Posterior vena cava (tissue), 2 donors: ENCODE measurements at regions of chr3 and their contacts with region 1.

Region 1: GRCh38 chr3:159765025-159765859 is 223.4 kb upstream of the IL12A start:
- DNase-seq: peak; percentile 96

Region 2: DNA sequence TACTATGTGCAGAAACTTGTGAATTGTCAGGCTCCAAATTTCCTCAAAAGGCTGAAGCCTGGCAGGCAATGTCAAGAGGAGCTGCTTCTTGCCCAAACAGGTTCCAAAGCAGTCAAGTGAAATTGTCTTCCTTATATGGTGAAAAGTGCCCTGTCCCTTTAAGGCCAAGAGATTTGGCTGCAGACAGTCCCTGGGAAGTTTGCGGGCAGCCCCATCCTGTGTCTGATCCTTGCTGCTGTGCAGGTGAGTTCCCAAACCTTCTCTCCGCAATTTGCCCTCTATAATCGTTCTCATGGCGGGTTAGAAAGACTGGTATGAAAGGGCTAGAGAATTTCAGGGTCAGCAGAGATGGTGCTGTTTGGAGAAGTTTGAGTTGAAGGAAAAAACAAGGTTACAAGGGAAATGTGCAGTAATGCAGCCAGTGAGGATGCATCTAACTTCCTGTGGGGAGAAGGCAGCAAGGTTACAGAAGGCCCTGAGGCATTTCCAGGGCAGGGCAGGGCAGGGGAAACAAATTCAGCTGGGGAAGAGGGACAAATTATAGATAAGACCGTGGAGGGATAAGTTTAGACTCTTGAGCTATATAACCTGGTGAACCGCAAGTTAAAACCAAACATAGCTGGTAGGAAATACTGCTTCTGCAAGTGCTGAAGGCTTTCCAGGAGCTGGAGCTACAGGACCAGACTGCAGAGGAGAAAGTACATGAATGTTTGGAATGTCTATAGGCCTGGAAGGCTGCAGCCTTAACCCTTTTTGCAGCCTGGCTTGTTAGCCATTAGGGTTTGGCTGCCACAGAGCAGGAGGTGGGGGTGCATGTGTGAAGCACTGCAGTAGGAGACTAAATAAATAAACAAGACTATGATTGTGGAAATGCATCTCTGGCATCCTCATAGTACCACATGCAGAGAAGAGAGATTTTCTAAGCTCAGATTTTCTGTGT is 32.8 kb before region 1 on chr3:
- intact Hi-C with region 1: no loop called
- DNase-seq: no peak

Region 3: DNA sequence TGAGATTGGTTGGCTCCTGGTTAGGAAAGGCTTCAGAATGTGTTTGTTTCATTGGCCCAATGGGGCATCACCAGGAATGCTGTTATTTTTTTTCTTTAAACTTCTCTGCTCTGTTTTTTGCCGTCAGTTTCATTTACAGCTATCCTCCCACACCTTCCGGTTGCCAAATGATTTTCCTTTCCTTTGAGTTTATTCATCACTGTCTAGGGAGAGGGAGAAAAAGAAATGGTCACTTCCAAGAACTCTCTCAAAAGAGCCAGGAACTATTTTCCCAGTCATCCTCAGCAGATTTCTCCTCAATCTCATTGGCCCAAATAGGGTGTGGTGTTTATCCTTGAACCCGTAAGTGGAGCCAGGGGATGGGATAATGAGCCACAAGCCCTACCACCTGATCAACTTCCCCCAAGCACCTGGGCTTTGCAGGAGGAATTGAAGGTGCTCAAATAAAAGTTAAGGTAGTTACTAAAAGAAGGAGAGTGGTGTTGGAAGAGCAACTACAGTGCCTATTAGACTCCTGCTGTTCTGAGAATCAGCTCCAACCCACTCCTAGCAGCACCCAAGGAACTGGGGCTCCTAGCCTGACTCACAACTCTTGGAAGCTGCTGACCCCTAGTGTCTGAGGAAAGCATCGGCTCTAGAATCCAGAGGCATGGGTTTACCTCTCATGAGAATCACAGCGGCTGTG is 39.6 kb after region 1 on chr3:
- intact Hi-C with region 1: loop called in 1 of 2 experiments (anchors 5 kb)
- DNase-seq: no peak

Region 4: GRCh38 chr3:159872374-159873109 is 107.3 kb after region 1 on chr3:
- intact Hi-C with region 1: loop called in 1 of 2 experiments (anchors 5 kb)
- DNase-seq: no peak

Region 5: DNA sequence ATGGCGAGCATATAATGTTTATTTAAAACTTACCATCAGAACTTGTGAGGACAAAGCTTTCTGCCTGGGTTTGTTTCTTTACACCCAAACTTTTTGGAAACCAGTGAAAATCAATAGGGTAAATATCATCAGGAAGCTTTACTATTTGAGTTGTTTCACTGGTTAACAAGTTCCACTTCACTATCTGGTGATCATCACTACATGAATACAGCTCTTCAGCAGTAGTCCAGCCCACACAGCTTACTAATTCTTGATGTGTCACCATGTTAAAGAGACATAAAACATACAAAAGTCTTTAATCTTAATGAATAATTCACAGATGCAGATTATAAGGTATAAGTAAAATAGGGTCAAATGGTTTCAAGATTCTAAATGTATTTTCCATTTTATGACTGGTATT is 616.2 kb after region 1 on chr3:
- intact Hi-C with region 1: no loop called
- DNase-seq: no peak